ENCODE measurements at regions of chr5 and their contacts with region 1.

Region 1: DNA sequence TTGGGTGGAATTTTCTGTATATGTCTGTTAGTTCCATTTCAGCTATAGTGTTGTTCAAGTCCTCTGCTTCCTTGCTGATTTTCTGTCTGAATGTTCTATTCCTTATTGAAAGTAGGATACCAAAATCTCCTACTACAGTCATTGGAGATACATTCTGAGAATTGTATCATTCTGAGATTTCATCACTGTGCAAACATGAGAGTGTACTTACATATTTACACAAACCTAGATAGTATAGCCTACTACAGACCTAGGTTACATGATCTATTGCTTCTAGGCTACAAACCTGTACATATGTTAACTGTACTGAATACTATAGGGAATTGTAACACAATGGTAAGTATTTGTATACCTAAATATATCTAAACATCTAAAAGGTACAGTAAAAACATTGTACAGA is 6.3 kb downstream of the PCDHA4 start:
- DNase-seq: no peak
- H3K4me3 ChIP-seq: no peak overlapping the region
- H3K27ac ChIP-seq: no peak overlapping the region
- H3K4me1 ChIP-seq: no peaks in the 10 kb centered on the region
- H3K27me3 ChIP-seq: no peaks in the 10 kb centered on the region
- CTCF ChIP-seq: no peak
- EP300 ChIP-seq: no peak
- POLR2A ChIP-seq: no peak
- RAD21 ChIP-seq: no peak

Region 2: DNA sequence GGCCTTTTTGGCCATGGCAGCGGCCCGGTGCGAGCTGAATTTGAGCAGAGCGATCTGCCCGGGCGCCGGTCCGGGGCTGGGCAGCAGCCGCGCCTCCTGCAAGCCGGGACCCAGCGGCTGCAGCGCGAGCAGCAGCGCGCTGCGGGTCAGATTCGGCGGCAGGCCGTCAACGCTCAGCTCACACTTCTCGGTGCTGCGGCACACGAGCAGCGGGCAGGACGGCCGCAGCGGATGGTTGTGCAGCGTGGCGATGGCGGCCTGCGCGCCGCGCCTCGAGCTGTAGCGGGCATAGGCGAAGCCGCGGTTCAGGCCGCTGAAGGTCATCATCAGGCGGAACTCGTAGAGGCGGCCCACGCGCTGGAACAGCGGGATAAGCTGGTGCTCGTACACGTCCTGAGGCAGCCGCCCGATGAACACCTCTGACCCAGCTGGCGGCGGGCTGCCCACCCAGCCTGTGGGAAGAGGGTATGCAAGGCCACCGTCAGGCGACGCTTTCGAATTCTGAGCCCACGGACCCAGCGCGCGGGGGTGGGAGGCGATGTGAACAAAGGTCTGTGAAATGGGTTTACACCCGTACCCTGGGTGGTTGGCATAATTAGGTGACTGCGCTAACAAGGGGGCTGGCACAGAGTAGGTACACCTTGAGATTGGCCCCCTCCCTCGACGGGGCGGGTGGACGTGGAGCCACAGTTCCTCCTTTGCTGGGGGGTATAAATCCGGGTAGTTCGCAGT is 140.5 kb before region 1 on chr5:
- CTCF ChIA-PET with region 1: no interaction called
- POLR2A ChIA-PET with region 1: no interaction called
- DNase-seq: peak in 1 of 2 experiments; percentile 52
- H3K4me3 ChIP-seq: no peak overlapping the region
- H3K27ac ChIP-seq: no peak overlapping the region
- H3K4me1 ChIP-seq: no peaks in the 10 kb centered on the region; a peak in 1 of 7 replicates
- H3K27me3 ChIP-seq: no peaks in the 10 kb centered on the region
- CTCF ChIP-seq: no peak
- EP300 ChIP-seq: no peak
- POLR2A ChIP-seq: no peak
- RAD21 ChIP-seq: no peak

Region 3: DNA sequence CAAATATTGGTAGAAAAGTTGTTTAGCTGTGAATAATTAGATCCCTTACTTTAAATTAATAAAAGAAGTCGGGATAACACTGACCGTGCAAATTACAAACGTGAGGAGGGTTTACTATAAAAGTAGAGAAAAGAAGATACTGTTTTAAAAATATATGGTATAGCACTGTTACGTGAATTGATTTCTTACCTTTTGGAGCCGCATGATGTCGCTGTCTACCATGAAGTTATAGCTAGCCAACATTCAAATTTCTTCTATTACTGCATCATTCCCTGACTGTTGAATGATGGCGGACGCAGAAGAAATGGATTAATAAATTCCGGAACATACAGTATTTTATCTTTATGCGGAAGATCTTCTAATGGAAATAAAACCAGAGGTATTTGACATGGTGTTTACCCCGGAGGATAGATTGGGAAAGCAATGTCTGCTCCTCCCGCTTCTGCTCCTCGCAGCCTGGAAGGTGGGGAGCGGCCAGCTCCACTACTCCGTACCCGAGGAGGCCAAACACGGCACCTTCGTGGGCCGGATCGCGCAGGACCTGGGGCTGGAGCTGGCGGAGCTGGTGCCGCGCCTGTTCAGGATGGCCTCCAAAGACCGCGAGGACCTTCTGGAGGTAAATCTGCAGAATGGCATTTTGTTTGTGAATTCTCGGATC is 14.7 kb after region 1 on chr5 and contains the start of gene PCDHA6:
- CTCF ChIA-PET with region 1: interaction called, 58 read pairs
- POLR2A ChIA-PET with region 1: interaction called, 3 read pairs
- DNase-seq: no peak
- H3K4me3 ChIP-seq: peak within 1 kb of the TSS in 1 of 4 experiments; percentile 62; a peak in 2 of 8 replicates
- H3K27ac ChIP-seq: no peak within 1 kb of the TSS
- H3K4me1 ChIP-seq: no peaks in the 10 kb centered on the region
- H3K27me3 ChIP-seq: no peaks in the 10 kb centered on the region
- CTCF ChIP-seq: no peak
- EP300 ChIP-seq: no peak
- POLR2A ChIP-seq: no peak
- RAD21 ChIP-seq: no peak
- total RNA-seq, gene PCDHA6: 6.5 and 7.1 TPM in 2 replicates